AG04449 (cell line): ENCODE measurements at regions of chr6 and their contacts with region 1.

Region 1: DNA sequence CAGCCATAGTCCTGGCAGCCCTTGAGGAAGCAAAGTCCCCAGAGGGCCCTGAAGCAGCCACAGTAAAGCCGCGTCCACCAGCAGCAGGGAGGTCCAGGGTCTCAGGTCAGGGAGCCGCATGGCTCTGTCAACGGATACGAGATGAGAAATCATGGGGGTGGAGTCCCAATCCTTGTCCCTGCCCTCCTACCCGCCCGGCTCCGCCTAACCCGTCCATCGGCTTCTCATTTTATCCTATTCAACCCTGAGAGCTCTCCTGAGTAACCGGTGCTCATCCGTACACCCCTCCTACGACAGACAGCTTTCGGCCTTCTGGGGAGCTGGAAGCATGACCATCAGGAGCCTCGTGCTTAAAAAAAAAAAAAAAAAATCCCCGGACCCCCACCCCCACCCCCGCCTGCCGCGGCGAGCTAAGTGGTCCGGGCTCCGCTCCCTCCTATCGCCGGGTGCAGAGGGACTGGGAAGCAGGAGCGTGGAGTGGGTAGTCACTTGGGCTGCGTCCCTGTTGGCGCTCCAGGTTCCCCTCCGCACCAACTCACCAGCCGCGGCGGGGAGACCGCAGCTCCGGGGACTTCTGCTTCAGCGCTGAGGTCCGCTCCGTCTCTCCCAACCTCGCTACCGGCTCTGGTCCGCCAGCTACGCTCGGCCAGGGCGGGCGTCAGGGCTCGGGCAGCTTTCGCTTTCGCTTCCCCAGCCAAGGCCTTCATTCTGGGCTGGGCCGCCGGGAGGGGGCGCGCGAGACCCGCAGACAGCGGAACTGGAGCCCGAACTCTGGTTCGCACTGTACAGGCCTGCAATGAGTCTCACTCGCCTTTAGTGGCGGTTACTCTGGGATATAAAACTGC is at the start of gene TAP2:
- DNase-seq: peak; percentile 47
- H3K4me3 ChIP-seq: peak within 1 kb of the TSS; percentile 96
- CTCF ChIP-seq: peak; percentile 97

Region 2: DNA sequence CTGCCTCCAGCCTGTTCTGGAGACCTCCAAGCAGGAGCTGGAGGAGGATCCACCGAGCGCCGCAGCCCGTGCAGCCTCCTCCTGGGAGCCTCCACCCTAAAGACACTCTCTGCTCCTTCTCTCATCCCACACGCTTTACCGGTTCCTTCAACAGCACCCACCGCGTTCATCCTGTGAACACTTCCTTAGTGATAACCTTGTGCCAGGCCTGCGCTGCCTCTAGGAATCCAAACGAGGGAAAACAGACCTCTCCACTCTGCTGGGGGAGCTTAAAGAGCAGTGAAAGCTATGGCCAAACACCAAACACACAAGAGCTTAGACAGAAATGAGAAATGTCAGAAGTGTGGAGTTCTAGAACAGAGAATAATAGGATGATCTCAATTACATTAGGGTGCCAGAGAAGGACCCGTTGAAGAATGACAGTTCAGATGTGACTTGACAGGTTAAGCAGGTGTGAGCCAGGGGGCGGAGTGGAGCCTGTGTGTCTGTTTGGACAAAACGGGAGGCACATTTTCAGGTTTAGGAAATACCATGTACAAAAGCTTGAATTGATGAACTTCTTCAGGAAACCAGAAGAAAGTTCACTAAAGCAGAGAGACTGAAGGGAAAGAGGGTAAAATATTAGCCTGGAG is 279.8 kb before region 1 on chr6:
- CTCF ChIA-PET with region 1: no interaction called
- POLR2A ChIA-PET with region 1: no interaction called
- DNase-seq: no peak
- H3K4me3 ChIP-seq: no peak overlapping the region
- CTCF ChIP-seq: no peak

Region 3: GRCh38 chr6:32825966-32826365 is 12.4 kb before region 1 on chr6:
- CTCF ChIA-PET with region 1: interaction called, 91 read pairs
- POLR2A ChIA-PET with region 1: interaction called, 6 read pairs
- DNase-seq: no peak
- H3K4me3 ChIP-seq: no peak overlapping the region
- CTCF ChIP-seq: peak; percentile 24

Region 4: GRCh38 chr6:32853541-32854375 is 15.4 kb after region 1 on chr6 and contains the starts of genes PSMB9 and TAP1:
- CTCF ChIA-PET with region 1: interaction called, 313 read pairs
- POLR2A ChIA-PET with region 1: interaction called, 22 read pairs
- DNase-seq: peak; percentile 51
- H3K4me3 ChIP-seq: peak within 1 kb of the TSS; percentile 89
- CTCF ChIP-seq: peak; percentile 87

Region 5: GRCh38 chr6:32862725-32863124 is 24.4 kb after region 1 on chr6:
- CTCF ChIA-PET with region 1: interaction called, 402 read pairs
- POLR2A ChIA-PET with region 1: interaction called, 5 read pairs
- DNase-seq: no peak
- H3K4me3 ChIP-seq: no peak overlapping the region
- CTCF ChIP-seq: no peak

Region 6: GRCh38 chr6:32912951-32913350 is 74.6 kb after region 1 on chr6:
- CTCF ChIA-PET with region 1: no interaction called
- POLR2A ChIA-PET with region 1: no interaction called
- DNase-seq: no peak
- H3K4me3 ChIP-seq: no peak overlapping the region
- CTCF ChIP-seq: no peak